ENCODE measurements at regions of chr2 and their contacts with region 1.

Region 1: DNA sequence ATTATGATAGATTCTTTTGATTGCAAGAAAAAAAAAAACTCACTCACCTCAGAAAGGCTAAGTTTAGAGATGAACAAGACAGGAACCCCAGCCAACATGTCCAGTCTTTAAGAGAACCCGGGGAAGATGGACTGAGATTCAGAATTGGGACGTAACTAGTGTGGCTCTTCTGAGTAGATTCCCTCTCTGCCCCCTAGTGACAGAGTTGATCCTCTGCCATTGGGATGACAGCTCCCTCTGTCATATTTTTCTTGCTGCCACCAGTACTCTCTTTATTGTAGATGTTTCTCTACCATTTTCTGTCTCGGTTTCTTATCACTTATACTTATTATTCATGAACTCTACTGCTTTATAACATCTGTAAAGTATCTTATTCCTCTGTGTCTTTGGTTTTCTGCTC is 77.7 kb downstream of the GULP1 start:
- DNase-seq: peak; percentile 56
- H3K4me3 ChIP-seq: no peak overlapping the region
- H3K27ac ChIP-seq: no peak overlapping the region
- H3K4me1 ChIP-seq: no peaks in the 10 kb centered on the region
- H3K27me3 ChIP-seq: no peaks in the 10 kb centered on the region
- CTCF ChIP-seq: peak; percentile 64 to 85

Region 2: DNA sequence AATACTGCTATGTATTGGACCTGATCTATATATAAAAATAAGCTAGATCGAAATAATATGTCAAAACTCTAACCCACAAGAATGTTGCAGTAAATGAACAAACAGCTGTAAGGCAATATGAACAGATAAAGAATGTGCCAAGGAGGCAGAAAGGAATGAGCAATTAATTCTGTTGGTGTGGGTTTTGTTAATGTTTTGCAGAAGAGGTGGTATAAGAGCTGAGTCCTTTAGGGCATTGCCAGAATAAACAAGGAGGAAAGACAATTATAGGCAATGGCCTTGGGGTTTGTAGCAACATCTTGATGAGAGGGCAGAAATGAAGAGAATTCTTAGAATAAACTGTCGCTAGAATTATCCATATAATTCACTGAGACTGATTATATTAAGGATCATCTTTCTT is 318.6 kb before region 1 on chr2:
- CTCF ChIA-PET with region 1: no interaction called
- dilution Hi-C with region 1: no loop called
- in situ Hi-C with region 1: no loop called
- intact Hi-C with region 1: loop called (anchors 5 kb)
- DNase-seq: peak; percentile 5
- H3K4me3 ChIP-seq: no peak overlapping the region
- H3K27ac ChIP-seq: no peak overlapping the region
- H3K4me1 ChIP-seq: no peaks in the 10 kb centered on the region
- H3K27me3 ChIP-seq: no peaks in the 10 kb centered on the region
- CTCF ChIP-seq: no peak

Region 3: DNA sequence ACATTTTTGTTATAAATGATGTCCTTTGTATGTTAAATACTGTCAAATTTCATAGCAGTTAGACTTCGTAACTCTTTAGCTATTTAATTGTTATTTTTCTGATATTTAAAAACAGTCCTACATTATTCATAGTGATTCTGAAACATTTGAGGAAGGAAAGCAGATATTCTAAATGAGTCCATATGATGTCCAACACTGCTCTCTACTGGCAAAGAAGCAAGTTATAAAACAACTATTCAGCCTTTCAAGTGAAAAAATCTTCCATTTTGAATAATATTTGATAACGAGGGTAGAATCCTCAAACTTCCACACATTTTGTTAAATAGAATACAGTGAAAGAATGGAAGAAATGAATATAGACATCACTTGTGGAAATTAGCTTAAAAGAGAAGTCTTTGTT is 143.1 kb after region 1 on chr2:
- CTCF ChIA-PET with region 1: no interaction called
- dilution Hi-C with region 1: no loop called
- in situ Hi-C with region 1: no loop called
- intact Hi-C with region 1: loop called (anchors 5 kb)
- DNase-seq: peak; percentile 25
- H3K4me3 ChIP-seq: no peak overlapping the region
- H3K27ac ChIP-seq: no peak overlapping the region
- H3K4me1 ChIP-seq: no peaks in the 10 kb centered on the region
- H3K27me3 ChIP-seq: no peaks in the 10 kb centered on the region
- CTCF ChIP-seq: peak; percentile 44 to 59

Measured in mammary epithelial cell (primary cell).